Gastrocnemius medialis (tissue), 4 donors: ENCODE measurements at regions of chr2 and their contacts with region 1.

Region 1: DNA sequence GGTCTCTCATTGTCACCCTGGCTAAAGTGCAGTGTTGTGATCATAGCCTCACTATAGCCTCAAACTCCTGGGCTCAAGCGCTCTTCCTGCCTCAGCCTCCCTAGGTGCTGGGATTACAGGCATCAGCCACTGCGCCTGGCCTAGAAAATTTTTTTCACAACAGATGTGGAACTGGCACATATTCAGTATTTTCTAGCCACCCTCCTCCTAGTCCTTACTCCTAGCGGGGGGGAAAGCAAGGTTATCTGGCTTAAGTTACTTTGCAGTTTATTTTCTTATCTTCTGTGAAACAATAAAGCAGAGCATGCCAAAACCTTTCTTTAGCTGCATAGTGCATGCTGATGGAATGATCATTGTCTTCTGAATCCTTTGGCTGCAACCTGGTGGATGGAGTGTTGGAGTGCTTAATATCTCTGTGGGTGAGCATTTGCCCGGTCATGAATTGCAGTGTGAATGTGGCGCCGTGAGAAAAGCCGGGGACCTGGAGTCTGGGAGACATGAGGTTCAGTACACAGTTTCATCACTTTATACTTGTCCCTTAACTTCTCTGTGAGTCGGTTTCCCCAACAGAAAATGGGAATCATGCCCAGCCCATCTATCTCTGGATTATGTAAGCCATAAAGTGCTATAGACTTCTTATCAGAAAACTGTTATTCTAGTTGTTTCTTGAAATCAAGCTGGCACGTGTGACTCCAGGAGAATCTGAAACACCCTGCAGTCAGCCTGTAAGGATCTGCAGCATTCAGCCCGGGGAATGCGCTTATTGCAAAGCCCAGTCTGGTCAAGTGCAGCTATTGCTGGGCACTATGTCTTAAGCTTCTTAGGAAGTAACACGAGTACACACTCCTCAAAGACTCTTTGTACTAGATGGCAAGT is 38.2 kb upstream of the MAP3K20 start:
- DNase-seq: peak; percentile 41 to 56
- ATAC-seq: peak; percentile 81 to 82
- H3K4me3 ChIP-seq: no peak overlapping the region
- H3K27ac ChIP-seq: peak overlapping the region; percentile 79 to 94 (median 90)
- H3K4me1 ChIP-seq: peaks cover 54 to 55% of the 10 kb centered on the region in 2 donors
- H3K27me3 ChIP-seq: no peaks in the 10 kb centered on the region
- CTCF ChIP-seq: no peak
- POLR2A ChIP-seq: peak; percentile 9 to 26

Region 2: DNA sequence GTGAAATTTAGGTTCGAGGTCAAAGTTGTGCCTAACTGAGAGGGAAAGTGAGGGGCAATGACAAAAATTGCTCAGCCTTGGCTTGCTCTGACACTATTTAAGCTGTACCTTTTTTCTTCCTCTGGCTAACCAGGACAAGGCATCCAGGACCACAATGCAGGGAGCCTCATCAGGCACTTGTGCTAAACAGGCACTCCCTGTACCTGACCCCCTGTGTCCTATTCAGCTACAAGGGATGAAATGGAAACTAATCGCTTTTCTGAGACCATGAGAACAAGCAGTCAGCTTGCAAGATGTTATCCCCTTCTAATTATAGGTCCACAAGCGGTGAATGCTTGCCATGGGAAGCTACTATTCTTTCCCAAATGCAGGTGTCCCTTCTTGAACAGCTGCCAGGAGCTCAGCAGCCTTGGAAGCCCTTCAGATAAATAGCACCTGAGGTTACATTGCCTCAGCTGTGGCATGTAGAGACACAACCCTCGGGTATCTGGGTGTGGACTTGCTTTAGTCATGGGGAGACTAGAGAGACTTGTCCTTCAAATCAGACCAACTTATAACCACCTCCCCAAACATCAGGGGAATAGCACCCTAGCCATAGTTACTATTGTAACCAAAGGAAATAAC is 629.2 kb before region 1 on chr2:
- in situ Hi-C with region 1: no loop called
- intact Hi-C with region 1: no loop called
- DNase-seq: no peak
- ATAC-seq: peak; percentile 34 to 51
- H3K4me3 ChIP-seq: no peak overlapping the region
- H3K27ac ChIP-seq: peak overlapping the region; percentile 37 to 71 (median 48)
- H3K4me1 ChIP-seq: peaks cover 4 to 9% of the 10 kb centered on the region in 2 donors
- H3K27me3 ChIP-seq: no peaks in the 10 kb centered on the region
- CTCF ChIP-seq: no peak
- POLR2A ChIP-seq: no peak

Region 3: GRCh38 chr2:173090973-173091660 is 53.6 kb after region 1 on chr2:
- in situ Hi-C with region 1: loop called in 1 of 4 experiments (anchors 5 kb)
- intact Hi-C with region 1: loop called (anchors 5 kb)
- DNase-seq: peak; percentile 73 to 91
- ATAC-seq: peak; percentile 82 to 83
- H3K4me3 ChIP-seq: peak overlapping the region; percentile 26 to 41 (median 33)
- H3K27ac ChIP-seq: peak overlapping the region; percentile 88 to 98 (median 92)
- H3K4me1 ChIP-seq: peaks cover 75 to 91% of the 10 kb centered on the region in 2 donors
- H3K27me3 ChIP-seq: no peaks in the 10 kb centered on the region
- CTCF ChIP-seq: peak; percentile 38 to 75 (median 59)
- POLR2A ChIP-seq: peak in 1 of 2 donors; percentile 61

Region 4: GRCh38 chr2:173159794-173160463 is 122.4 kb after region 1 on chr2:
- in situ Hi-C with region 1: no loop called
- intact Hi-C with region 1: loop called (anchors 5 kb)
- DNase-seq: peak; percentile 96 to 99
- ATAC-seq: peak; percentile 99
- H3K4me3 ChIP-seq: no peak overlapping the region
- H3K27ac ChIP-seq: peak overlapping the region; percentile 83 to 90 (median 87)
- H3K4me1 ChIP-seq: peaks cover 51 to 61% of the 10 kb centered on the region in 2 donors
- H3K27me3 ChIP-seq: no peaks in the 10 kb centered on the region
- CTCF ChIP-seq: no peak
- POLR2A ChIP-seq: peak in 1 of 2 donors; percentile 15